ENCODE measurements at regions of chr19 and their contacts with region 1.

Region 1: GRCh38 chr19:19138169-19138981 is at the start of gene TMEM161A:
- DNase-seq: peak; percentile 98
- H3K4me3 Mint-ChIP-seq: peak within 1 kb of the TSS; percentile 94
- H3K27ac Mint-ChIP-seq: peak within 1 kb of the TSS; percentile 61
- H3K4me1 Mint-ChIP-seq: peaks cover 27% of the 10 kb centered on the region
- H3K27me3 Mint-ChIP-seq: no peaks in the 10 kb centered on the region
- total RNA-seq, gene TMEM161A: 18.1 to 18.3 TPM

Region 2: GRCh38 chr19:19033426-19034203 is 104.8 kb before region 1 on chr19 and contains the starts of genes ARMC6 and SUGP2:
- CTCF ChIA-PET with region 1: interaction called, 3 read pairs
- intact Hi-C with region 1: loop called (anchors 5 kb)
- DNase-seq: peak; percentile 85
- H3K4me3 Mint-ChIP-seq: peak within 1 kb of the TSS; percentile 95
- H3K27ac Mint-ChIP-seq: peak within 1 kb of the TSS; percentile 86
- H3K4me1 Mint-ChIP-seq: peaks cover 37% of the 10 kb centered on the region
- H3K27me3 Mint-ChIP-seq: no peaks in the 10 kb centered on the region
- total RNA-seq, gene ARMC6: 24.2 to 24.6 TPM
- total RNA-seq, gene SUGP2: 149 to 154 TPM

Region 3: GRCh38 chr19:19053508-19054314 is 84.7 kb before region 1 on chr19:
- CTCF ChIA-PET with region 1: interaction called, 9 read pairs
- intact Hi-C with region 1: loop called (anchors 1 kb)
- DNase-seq: peak; percentile 62
- H3K4me3 Mint-ChIP-seq: no peak overlapping the region
- H3K27ac Mint-ChIP-seq: no peak overlapping the region
- H3K4me1 Mint-ChIP-seq: no peaks in the 10 kb centered on the region
- H3K27me3 Mint-ChIP-seq: no peaks in the 10 kb centered on the region

Region 4: DNA sequence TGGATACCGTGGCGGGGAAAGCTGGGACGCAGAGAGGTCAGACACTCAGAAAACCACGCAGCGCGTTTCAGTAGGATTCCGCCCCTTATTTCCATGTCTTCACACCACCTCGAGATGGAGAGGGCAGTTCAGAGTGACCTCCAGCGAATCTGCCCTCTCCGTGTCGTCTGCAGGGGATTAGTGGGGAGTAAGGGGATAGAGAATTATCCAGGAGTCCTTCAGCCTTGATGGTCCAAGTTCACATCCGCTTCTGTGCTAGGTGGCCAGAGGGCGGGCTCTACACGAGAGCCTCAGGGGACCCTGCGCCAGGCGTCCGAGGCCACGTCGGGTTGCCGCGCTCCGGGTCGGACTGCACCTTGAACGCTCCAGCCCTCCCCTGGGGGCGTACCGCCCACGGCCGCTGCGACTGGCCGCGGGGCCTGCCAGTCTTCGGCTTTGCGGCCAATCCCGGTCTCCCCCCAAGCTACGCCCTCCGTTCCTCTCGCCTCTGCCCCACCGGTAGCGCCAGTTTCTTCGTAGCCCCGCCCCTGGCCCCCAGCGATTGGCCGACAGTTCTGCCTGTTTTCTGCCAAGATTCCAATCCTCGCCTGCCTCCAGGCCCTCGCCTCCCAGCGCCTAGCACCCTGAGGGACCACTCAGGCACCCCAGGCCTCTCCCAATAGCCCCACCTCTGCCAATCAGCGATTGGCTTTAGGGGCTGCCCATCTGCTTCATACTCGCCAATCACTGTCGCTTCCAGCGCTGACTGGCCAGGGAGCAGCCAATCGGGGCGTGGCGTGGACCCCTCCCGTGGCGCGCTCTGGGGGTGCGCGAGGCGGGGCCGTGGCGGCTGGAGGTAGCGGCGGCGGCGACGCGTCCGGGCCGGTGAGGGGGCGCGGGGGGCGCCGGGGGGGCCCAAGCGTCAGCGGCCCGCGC is 74.9 kb before region 1 on chr19 and contains the start of gene SLC25A42:
- CTCF ChIA-PET with region 1: no interaction called
- intact Hi-C with region 1: loop called (anchors 2 kb)
- DNase-seq: peak; percentile 99
- H3K4me3 Mint-ChIP-seq: peak within 1 kb of the TSS; percentile 85
- H3K27ac Mint-ChIP-seq: peak within 1 kb of the TSS; percentile 83
- H3K4me1 Mint-ChIP-seq: peaks cover 41% of the 10 kb centered on the region
- H3K27me3 Mint-ChIP-seq: no peaks in the 10 kb centered on the region
- total RNA-seq, gene SLC25A42: 6.7 to 8.5 TPM

Region 5: DNA sequence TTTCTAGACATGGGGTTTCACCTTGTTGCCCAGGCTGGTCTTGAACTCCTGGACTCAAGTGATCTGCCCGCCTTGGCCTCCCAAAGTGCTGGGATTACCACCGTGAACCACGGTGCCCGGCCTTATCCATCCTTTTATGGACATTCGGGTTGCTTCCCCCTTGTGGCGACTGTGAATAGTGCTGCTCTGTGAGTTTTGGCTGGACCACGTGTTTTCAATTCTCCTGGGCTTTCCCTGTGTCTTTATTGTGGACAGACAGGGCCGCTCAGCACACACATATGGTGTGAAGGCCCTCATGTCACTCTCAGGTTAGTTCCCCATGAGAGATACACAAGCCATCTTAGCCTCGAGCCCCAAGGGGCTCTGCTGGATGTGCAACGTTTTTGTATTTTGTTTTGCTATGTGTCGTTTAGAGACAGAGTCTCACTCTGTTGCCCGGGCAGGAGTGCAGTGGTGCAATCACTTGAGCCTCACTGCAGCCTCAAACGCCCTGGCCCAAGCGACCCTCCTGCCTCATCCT is 222.8 kb after region 1 on chr19:
- CTCF ChIA-PET with region 1: no interaction called
- intact Hi-C with region 1: loop called (anchors 2 kb)
- DNase-seq: peak; percentile 92
- H3K4me3 Mint-ChIP-seq: no peak overlapping the region
- H3K27ac Mint-ChIP-seq: no peak overlapping the region
- H3K4me1 Mint-ChIP-seq: peaks cover 27% of the 10 kb centered on the region
- H3K27me3 Mint-ChIP-seq: no peaks in the 10 kb centered on the region